ENCODE measurements at regions of chr16 and their contacts with region 1.

Region 1: GRCh38 chr16:11407047-11407982 is 62.1 kb downstream of the RMI2 start:
- DNase-seq: peak; percentile 82
- CTCF ChIP-seq: peak; percentile 87

Region 2: GRCh38 chr16:10954903-10955302 is 452.4 kb before region 1 on chr16:
- CTCF ChIA-PET with region 1: interaction called, 11 read pairs
- POLR2A ChIA-PET with region 1: no interaction called
- DNase-seq: no peak
- CTCF ChIP-seq: no peak

Region 3: GRCh38 chr16:11386791-11387546 is 20.3 kb before region 1 on chr16:
- CTCF ChIA-PET with region 1: interaction called, 249 read pairs
- POLR2A ChIA-PET with region 1: no interaction called
- DNase-seq: no peak
- CTCF ChIP-seq: peak; percentile 25

Region 4: GRCh38 chr16:11417487-11417886 is 10.2 kb after region 1 on chr16:
- CTCF ChIA-PET with region 1: interaction called, 14 read pairs
- POLR2A ChIA-PET with region 1: no interaction called
- DNase-seq: no peak
- CTCF ChIP-seq: no peak

Region 5: DNA sequence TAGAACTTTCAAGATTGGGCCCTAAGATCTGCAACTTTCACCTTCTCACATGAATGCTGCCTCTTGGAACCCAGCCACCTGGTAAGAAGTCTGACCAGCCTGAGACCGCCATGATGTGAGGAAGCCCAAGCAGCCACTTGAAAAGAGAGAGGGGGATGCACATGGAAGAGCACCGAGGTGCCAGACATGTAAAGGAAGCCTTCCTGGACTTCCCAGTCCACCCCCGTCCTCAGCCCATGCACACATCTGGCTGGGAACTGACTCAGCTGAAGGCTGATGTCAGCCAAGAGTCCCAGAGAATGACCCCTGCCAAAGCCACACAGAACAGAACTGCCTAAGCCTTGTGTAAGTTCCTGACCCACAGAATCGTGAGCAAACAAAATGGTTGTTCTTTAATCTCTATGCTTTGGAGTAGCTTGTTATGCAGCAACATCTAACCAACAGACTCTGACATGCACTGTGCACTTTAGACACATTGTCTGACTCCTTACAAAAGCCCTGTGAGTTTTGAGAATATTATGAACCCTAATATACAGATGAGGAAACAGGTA is 24.7 kb after region 1 on chr16:
- CTCF ChIA-PET with region 1: interaction called, 45 read pairs
- POLR2A ChIA-PET with region 1: no interaction called
- DNase-seq: no peak
- CTCF ChIP-seq: no peak

Region 6: DNA sequence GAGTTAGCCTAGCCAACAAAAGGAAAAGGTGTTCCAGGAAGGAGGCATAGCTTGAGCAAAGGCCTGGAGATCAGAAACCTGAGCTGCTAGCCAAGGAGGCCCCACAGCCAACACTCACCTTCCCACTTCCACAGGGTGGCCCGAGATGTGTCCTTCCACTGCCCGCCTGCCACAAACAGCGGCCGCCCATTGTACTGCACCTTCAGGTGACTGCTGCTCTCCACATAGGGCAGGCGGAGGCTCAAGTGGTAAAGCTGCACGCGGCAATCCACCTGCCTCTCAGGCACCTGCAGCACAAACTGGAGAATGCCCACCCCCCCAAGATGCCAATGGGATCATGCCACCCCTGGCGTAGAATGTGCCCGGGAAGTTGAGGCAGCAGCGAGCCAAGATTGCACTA is 49.4 kb after region 1 on chr16:
- CTCF ChIA-PET with region 1: no interaction called
- POLR2A ChIA-PET with region 1: no interaction called
- DNase-seq: no peak
- CTCF ChIP-seq: no peak

Region 7: GRCh38 chr16:11484691-11485258 is 77.5 kb after region 1 on chr16:
- CTCF ChIA-PET with region 1: no interaction called
- POLR2A ChIA-PET with region 1: no interaction called
- DNase-seq: no peak
- CTCF ChIP-seq: no peak

Region 8: GRCh38 chr16:11639925-11640899 is 232.9 kb after region 1 on chr16:
- CTCF ChIA-PET with region 1: interaction called, 33 read pairs
- POLR2A ChIA-PET with region 1: no interaction called
- DNase-seq: no peak
- CTCF ChIP-seq: no peak